ENCODE measurements at regions of chr11 and their contacts with region 1.

Region 1: DNA sequence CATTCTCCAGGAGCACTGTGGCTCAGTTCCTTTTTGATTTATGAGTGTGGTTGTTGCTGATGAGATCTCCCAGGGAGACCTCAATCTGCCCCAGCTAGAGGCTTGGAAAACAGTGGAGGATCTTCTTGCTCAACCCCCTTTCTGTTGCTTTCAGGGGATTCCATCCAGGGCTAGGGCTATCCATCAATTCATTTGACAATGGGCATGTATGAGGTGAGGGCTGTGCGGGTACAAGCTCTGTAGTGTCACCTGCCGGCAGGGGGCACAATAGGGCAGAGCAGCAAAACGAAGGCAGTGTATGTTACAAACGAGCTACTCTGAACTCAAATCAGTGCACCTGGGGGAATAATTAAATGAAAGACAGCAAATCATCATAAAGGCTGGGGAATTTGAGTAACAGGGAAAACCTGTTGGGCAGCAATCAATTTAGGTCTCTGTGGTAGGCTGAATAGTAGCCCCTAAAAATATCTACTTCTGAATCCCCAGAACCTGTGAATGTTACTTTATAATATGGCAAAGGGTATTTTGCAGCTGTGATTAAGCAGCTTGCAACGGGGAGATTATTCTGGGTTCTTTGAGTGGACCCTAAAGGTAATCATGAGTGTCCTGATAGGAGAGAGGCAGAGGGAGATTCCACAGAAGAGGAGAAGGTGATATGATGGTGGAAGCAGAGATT is 170.3 kb upstream of the ZBED5 start:
- DNase-seq: peak; percentile 44
- CTCF ChIP-seq: peak; percentile 78

Region 2: GRCh38 chr11:10792398-10792975 is 235.7 kb before region 1 on chr11:
- in situ Hi-C with region 1: loop called (anchors 10 kb)
- DNase-seq: peak; percentile 90
- CTCF ChIP-seq: peak; percentile 97

Region 3: DNA sequence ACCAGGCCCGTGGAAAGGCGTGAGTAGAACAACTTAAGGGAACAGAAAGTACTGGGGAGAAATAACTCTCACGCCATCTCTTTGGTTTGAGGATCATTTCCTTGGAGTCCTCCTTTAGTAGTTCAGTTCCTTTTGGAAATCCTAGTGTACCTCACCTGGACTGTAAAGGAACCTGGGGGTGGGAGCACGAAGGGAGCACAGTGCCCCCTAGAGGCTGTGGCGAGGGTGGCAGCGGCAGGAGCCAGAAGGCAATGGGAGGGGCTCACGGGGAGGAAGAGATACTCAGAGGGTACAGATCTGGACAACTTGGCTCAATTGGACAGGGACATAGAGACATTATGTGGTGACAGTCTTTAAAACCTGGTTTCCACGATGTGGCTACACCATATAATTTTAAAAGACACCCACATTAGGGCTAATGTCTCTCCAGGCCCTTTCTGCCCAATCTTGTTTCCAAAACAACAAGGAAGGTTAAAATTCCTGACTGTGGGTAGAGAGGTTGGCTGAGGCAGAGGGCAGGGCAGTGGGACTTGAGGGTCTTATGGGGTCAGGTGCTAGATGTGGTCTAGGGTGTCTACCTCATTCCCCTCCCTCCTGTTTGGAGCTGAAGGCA is 237.9 kb after region 1 on chr11:
- in situ Hi-C with region 1: loop called (anchors 25 kb)
- DNase-seq: peak; percentile 85
- CTCF ChIP-seq: peak; percentile 95